MCF 10A (cell line): ENCODE measurements at regions of chr5 and their contacts with region 1.

Region 1: GRCh38 chr5:76582230-76583162 is 40.7 kb downstream of the F2RL2 start:
- DNase-seq: no peak
- H3K4me3 Mint-ChIP-seq: no peak overlapping the region
- H3K27ac Mint-ChIP-seq: no peak overlapping the region
- H3K4me1 Mint-ChIP-seq: no peaks in the 10 kb centered on the region
- H3K27me3 Mint-ChIP-seq: peaks cover 13% of the 10 kb centered on the region
- CTCF ChIP-seq: no peak

Region 2: DNA sequence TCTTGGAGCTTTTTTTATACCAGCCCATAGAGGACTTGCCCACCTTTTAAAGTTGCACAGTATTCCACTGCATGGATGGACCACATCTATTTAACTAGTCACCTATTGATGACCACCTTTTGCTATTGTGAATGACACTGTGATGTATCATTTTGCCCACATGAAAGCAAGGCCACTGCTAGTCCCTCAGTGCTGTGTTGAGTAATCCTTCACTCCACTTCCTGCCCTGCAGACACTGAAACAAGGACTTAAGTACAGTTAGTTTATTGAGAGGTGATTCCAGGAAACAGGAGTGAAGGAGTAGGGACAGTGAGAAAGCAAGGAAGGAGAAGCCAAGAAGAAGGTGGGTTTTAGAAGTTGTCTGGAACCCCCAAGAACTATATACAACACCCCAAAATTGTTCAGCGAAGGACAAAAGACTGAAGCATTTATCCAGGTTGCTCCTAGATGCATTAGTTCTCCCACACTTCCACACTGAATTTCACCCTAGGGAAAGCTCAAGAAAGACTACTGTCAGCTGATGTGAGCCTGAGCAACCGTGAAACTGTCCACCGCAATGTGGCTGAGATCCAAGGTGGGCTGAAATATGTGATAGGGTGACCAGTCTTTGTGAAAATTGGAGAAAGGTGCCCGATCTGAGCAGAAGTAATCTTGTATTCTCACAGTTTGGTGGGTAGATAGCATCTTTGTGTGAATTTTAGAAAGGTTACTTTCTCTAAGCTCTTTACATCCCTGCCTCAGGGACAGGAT is 1300.6 kb before region 1 on chr5:
- CTCF ChIA-PET with region 1: no interaction called
- POLR2A ChIA-PET with region 1: no interaction called
- intact Hi-C with region 1: no loop called
- DNase-seq: peak; percentile 10
- H3K4me3 Mint-ChIP-seq: no peak overlapping the region
- H3K27ac Mint-ChIP-seq: no peak overlapping the region
- H3K4me1 Mint-ChIP-seq: peaks cover 23% of the 10 kb centered on the region
- H3K27me3 Mint-ChIP-seq: no peaks in the 10 kb centered on the region
- CTCF ChIP-seq: no peak

Region 3: DNA sequence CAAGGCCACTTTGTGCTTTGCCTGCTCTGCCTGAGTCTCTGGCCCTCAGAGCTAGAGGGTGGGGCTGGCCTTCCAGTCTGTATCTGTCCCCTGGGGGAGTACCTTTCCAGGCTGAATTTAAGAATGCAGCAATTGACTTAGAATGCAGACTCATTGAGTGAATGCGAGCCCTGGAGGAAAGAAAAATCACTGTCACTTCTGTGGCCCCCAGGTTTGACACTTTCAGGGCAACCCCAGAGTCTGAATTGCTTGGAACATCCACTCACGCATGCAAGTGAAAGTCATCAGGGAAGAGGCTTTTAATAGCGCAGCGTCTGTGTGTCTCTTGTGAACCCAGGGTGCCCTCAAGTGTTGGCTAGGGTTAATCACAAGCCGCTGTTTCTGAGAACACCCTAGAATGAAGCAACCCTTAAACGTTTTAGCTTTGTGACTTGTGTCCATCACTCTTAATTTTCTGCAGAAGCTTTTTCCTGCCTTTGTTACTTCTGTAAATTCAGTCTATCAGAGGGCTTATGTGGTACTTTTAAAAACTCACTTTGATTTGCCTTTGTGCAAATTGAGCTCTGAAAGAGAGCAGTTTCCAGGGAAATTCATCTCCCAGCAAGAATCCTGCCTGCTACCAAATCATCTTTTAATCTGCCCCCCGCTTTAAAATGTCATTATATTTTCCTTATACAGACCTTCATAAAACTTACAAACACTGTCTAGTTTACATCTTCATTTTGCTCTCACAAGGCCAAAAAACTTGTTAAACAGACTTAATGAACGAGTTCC is 326.2 kb before region 1 on chr5:
- CTCF ChIA-PET with region 1: interaction called, 3 read pairs
- POLR2A ChIA-PET with region 1: no interaction called
- intact Hi-C with region 1: loop called (anchors 5 kb)
- DNase-seq: peak; percentile 78
- H3K4me3 Mint-ChIP-seq: no peak overlapping the region
- H3K27ac Mint-ChIP-seq: no peak overlapping the region
- H3K4me1 Mint-ChIP-seq: no peaks in the 10 kb centered on the region
- H3K27me3 Mint-ChIP-seq: peaks cover 47% of the 10 kb centered on the region
- CTCF ChIP-seq: peak; percentile 68

Region 4: GRCh38 chr5:76331126-76331525 is 251.4 kb before region 1 on chr5:
- CTCF ChIA-PET with region 1: interaction called, 13 read pairs
- POLR2A ChIA-PET with region 1: no interaction called
- intact Hi-C with region 1: no loop called
- DNase-seq: no peak
- H3K4me3 Mint-ChIP-seq: no peak overlapping the region
- H3K27ac Mint-ChIP-seq: no peak overlapping the region
- H3K4me1 Mint-ChIP-seq: no peaks in the 10 kb centered on the region
- H3K27me3 Mint-ChIP-seq: no peaks in the 10 kb centered on the region
- CTCF ChIP-seq: no peak

Region 5: GRCh38 chr5:76337953-76338451 is 244.5 kb before region 1 on chr5:
- CTCF ChIA-PET with region 1: interaction called, 24 read pairs
- POLR2A ChIA-PET with region 1: no interaction called
- intact Hi-C with region 1: loop called (anchors 1 kb)
- DNase-seq: peak; percentile 84
- H3K4me3 Mint-ChIP-seq: no peak overlapping the region
- H3K27ac Mint-ChIP-seq: no peak overlapping the region
- H3K4me1 Mint-ChIP-seq: no peaks in the 10 kb centered on the region
- H3K27me3 Mint-ChIP-seq: no peaks in the 10 kb centered on the region
- CTCF ChIP-seq: peak; percentile 69

Region 6: DNA sequence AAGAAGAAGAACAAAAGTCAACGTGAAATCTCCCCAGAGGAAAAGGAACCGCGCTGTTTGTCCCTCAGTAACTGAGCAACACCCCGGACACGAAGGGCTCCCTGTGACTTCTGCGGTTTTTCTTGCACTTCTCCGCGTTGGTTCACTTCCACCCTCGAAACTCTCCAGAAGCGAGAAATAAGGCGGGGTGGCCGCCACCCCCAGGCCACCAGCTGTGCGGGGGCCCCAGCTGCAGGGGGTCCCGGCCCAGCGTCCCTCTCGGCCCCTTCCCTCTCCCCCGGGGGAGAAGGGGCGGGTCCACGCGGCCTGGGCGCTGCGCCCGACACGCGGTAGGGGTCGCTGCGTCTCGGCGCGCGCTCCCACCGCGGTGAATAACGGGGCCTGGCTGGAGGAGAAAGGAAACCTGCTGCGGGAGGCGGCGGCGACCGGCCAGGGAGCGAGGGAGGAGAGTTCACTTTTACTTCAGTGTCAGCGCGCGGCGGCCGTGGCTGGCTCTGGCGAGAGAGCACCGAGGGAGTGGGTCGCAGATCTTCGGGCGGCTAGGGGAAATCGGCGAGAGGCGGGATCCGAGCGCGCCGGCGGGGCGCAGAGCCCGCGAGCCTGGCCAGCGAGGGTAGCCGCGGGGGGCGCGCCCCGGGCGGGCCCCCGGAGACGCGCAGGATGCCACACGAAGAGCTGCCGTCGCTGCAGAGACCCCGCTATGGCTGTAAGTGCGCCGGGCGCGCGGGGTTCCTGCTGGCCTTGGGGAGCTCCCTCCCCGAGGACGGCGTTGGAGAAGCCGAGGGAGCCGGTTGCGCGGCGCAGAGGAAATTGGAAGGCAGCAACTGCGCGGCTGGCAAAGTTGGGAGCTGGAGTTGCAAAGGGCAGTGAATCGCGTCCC is 179.4 kb before region 1 on chr5 and contains the start of gene IQGAP2:
- CTCF ChIA-PET with region 1: interaction called, 18 read pairs
- POLR2A ChIA-PET with region 1: no interaction called
- intact Hi-C with region 1: loop called (anchors 1 kb)
- DNase-seq: peak; percentile 67
- H3K4me3 Mint-ChIP-seq: peak within 1 kb of the TSS; percentile 76
- H3K27ac Mint-ChIP-seq: no peak within 1 kb of the TSS
- H3K4me1 Mint-ChIP-seq: no peaks in the 10 kb centered on the region
- H3K27me3 Mint-ChIP-seq: peaks cover 50% of the 10 kb centered on the region
- CTCF ChIP-seq: peak; percentile 59
- total RNA-seq, gene IQGAP2: 0.93 and 1.5 TPM in 2 replicates

Region 7: GRCh38 chr5:76571559-76571958 is 10.9 kb before region 1 on chr5:
- CTCF ChIA-PET with region 1: interaction called, 16 read pairs
- POLR2A ChIA-PET with region 1: interaction called, 3 read pairs
- intact Hi-C with region 1: no loop called
- DNase-seq: no peak
- H3K4me3 Mint-ChIP-seq: no peak overlapping the region
- H3K27ac Mint-ChIP-seq: no peak overlapping the region
- H3K4me1 Mint-ChIP-seq: no peaks in the 10 kb centered on the region
- H3K27me3 Mint-ChIP-seq: peaks cover 25% of the 10 kb centered on the region
- CTCF ChIP-seq: no peak

Region 8: DNA sequence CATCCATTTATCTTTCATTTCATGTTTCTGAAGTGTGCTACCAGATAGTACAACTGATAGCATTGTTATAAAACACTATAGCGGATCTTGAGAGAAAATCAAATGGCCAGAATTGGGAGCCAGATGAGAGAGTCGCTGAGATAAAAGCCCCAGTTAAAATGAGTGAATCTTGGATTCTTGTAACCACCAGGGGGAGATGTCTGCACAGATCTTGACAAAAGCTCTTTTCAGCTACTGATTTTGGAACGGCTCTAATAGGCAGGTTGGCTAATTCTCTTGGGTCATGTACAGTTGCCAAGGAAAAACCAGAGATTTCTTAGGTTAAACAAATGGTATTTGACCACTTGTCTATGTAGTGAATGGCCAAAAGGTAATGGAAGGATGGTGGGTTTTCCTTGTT is 19.0 kb after region 1 on chr5:
- CTCF ChIA-PET with region 1: interaction called, 11 read pairs
- POLR2A ChIA-PET with region 1: no interaction called
- intact Hi-C with region 1: no loop called
- DNase-seq: peak; percentile 83
- H3K4me3 Mint-ChIP-seq: no peak overlapping the region
- H3K27ac Mint-ChIP-seq: no peak overlapping the region
- H3K4me1 Mint-ChIP-seq: peaks cover 25% of the 10 kb centered on the region
- H3K27me3 Mint-ChIP-seq: no peaks in the 10 kb centered on the region
- CTCF ChIP-seq: peak; percentile 63